ENCODE measurements at regions of chr19 and their contacts with region 1.

Region 1: DNA sequence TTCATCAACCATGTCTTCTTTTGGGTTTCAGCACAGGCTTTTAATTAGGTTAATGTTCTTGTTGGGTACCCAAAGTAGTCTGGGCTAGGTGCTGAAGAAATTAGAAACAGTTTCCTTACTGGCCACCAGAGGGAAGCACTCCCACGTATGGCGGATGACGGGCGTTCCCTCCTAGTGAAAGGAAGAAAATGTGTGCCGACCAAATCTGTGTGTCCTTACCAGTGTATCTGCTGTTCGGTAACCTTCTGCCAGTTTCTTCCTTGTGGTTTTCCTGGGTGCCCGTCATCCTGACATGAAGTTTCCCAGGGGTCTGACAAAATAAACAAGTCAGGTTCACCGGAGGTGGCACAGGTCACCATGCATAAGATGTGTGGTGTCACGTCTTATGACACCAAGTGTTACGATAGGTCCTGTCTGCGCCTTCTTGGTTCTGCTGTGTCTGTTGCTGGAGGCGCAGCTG is 6.0 kb upstream of the WDR88 start:
- DNase-seq: peak; percentile 40
- H3K4me3 Mint-ChIP-seq: no peak overlapping the region
- H3K27ac Mint-ChIP-seq: no peak overlapping the region
- H3K4me1 Mint-ChIP-seq: peaks cover 9% of the 10 kb centered on the region
- H3K27me3 Mint-ChIP-seq: no peaks in the 10 kb centered on the region

Region 2: DNA sequence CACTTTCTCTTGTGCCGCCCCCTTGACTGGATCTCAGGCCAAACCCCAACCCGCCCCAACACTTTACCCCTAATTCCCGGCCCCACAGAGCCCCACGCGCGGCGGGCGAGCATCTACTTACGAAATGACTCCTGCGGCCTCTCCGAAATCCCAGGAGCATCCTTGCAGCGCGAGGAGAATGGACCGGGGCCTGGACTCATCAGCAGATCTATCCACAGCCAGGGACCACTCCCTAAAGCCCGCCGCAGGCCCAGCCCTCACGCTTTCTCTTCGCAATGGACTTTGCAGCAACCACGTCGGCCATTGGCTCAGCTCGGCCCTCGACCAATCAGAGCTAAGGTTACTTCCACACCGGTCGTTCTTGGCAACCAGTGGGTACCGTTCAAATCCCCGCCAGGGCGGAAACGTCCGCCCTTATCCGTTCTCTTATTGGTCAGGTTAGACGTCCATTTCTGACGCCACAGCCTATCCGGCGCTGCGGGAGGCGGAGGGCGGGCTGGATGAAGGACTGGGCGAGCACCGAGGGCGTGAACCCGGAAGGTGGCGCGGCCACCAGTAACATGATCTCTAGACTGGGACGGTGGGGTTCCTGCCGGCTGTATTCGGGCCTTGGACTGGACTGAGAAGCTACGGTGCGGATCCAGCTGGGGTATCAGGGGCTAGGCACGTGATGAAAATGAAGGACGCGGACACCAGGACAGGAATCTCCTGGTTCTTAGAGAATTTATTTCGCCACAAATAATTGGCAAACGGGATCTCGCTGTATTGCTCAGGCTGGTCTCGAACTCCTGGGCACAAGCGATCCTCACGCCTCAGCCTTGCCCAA is 154.0 kb before region 1 on chr19 and contains the starts of genes CEP89 and FAAP24:
- intact Hi-C with region 1: no loop called
- DNase-seq: peak; percentile 98
- H3K4me3 Mint-ChIP-seq: peak within 1 kb of the TSS; percentile 96
- H3K27ac Mint-ChIP-seq: peak within 1 kb of the TSS; percentile 86
- H3K4me1 Mint-ChIP-seq: peaks cover 15% of the 10 kb centered on the region
- H3K27me3 Mint-ChIP-seq: no peaks in the 10 kb centered on the region
- total RNA-seq, gene CEP89: 15.5 and 17.2 TPM in 2 replicates
- total RNA-seq, gene FAAP24: 10.7 and 11.2 TPM in 2 replicates

Region 3: GRCh38 chr19:33186431-33187182 is 60.6 kb after region 1 on chr19:
- intact Hi-C with region 1: loop called (anchors 1 kb)
- DNase-seq: no peak
- H3K4me3 Mint-ChIP-seq: no peak overlapping the region
- H3K27ac Mint-ChIP-seq: no peak overlapping the region
- H3K4me1 Mint-ChIP-seq: no peaks in the 10 kb centered on the region
- H3K27me3 Mint-ChIP-seq: peaks cover 14% of the 10 kb centered on the region

Region 4: DNA sequence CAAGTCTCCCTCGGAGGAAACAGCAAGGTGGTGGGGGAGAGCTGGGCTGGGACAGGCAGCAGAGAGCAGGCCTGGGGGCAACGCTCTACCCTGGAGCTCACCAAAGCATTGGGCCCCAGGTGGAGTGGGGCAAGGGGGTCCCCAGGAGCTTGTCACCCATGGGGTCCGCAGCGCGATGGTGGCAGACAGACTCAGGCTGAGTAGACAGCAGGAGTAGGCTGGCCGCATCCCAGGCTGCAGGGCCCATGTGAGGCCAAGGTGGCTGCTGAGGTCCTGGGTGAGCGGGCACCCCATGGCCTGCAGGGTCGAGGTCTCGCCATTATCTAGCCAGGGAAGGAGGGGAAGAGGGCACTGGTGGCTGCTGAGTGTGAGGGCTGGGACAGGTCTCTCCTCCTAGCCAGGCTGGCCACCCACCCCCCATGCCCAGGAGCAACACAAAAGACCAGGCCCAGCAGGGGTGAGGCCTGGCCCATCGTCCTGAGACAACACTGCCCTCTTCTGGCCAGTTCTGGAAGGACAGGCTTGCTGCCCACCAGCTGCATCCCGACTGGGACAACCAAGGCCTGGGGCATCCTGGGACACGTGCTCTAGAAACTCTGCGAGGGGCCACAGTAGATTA is 280.7 kb after region 1 on chr19:
- intact Hi-C with region 1: loop called (anchors 5 kb)
- DNase-seq: peak; percentile 54
- H3K4me3 Mint-ChIP-seq: no peak overlapping the region
- H3K27ac Mint-ChIP-seq: no peak overlapping the region
- H3K4me1 Mint-ChIP-seq: peaks cover 4% of the 10 kb centered on the region
- H3K27me3 Mint-ChIP-seq: no peaks in the 10 kb centered on the region